Naive thymus-derived CD4-positive, alpha-beta T cell (primary cell): ENCODE measurements at regions of chr6 and their contacts with region 1.

Region 1: GRCh38 chr6:136607932-136608772 is 57.9 kb upstream of the MAP7 start:
- DNase-seq: peak; percentile 47 to 77 (median 69)
- ATAC-seq: peak; percentile 90
- H3K4me3 ChIP-seq: no peak overlapping the region
- H3K4me3 Mint-ChIP-seq: no peak overlapping the region
- H3K27ac ChIP-seq: no peak overlapping the region
- H3K27ac Mint-ChIP-seq: peak overlapping the region in 3 of 9 donors; percentile 11 to 53 (median 46)
- H3K4me1 ChIP-seq: no peaks in the 10 kb centered on the region
- H3K4me1 Mint-ChIP-seq: peaks cover 0 to 23% (median 5%) of the 10 kb centered on the region in 7 donors
- H3K27me3 ChIP-seq: no peaks in the 10 kb centered on the region
- H3K27me3 Mint-ChIP-seq: no peaks in the 10 kb centered on the region

Region 2: DNA sequence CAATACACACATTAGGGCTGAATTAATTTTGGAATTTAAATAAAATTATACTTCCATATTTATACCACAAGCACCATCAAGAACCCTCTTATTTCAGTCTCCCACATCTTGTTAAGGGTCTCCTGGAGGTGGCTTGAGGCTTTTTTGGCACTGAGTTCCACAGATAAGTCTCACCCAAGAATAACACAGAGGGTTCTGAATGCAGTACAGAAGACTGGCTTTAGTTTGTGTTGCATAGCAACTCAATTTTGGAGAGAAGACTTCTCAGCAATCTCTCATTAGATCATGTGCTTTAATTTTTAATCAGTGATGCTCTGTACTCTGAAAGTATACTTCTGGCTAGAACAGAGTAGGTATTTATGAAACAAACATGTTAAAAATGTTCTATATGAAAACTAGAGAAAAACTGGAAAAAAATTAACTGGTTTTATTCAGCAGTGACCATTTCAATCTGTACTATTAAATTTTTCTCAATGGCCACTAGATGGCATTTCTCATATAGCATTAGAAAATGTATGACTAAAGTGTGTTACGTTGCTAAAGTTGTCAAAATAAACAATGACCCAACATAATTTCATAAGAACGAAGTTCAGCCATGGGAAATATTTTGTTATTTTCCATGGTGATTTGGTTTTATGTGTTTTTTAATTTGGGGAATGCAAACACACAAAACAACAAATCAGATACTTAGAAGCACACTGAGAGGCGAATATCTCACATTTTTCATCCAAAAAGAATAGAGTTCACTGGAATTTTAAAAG is 25.3 kb before region 1 on chr6:
- CTCF ChIA-PET with region 1: no interaction called
- POLR2A ChIA-PET with region 1: no interaction called
- intact Hi-C with region 1: loop called in 1 of 2 experiments (anchors 2 kb)
- DNase-seq: no peak
- ATAC-seq: peak; percentile 72
- H3K4me3 ChIP-seq: no peak overlapping the region
- H3K4me3 Mint-ChIP-seq: no peak overlapping the region
- H3K27ac ChIP-seq: no peak overlapping the region
- H3K27ac Mint-ChIP-seq: no peak overlapping the region
- H3K4me1 ChIP-seq: no peaks in the 10 kb centered on the region
- H3K4me1 Mint-ChIP-seq: peaks cover 0 to 2% (median 0%) of the 10 kb centered on the region in 7 donors
- H3K27me3 ChIP-seq: no peaks in the 10 kb centered on the region
- H3K27me3 Mint-ChIP-seq: no peaks in the 10 kb centered on the region

Region 3: DNA sequence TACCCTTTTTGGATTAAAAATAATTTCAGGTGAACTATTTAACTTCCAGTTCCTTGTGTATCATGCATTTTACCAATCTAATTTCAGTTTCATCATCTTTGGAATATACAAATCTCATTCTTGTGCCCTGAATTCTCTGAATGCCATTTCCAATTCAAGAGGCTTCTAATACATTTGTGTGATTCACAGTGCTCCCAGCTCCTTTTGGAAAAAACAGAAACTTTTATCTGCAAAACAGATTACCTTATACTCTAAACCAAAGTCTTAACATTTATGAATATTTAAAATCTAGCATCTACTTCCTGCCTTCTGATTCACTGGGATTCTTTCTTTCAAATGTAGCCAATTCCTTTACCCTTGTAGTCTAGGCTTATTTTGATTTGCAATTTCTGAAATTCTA is 203.1 kb after region 1 on chr6:
- CTCF ChIA-PET with region 1: no interaction called
- POLR2A ChIA-PET with region 1: no interaction called
- intact Hi-C with region 1: no loop called
- DNase-seq: no peak
- ATAC-seq: no peak
- H3K4me3 ChIP-seq: no peak overlapping the region
- H3K4me3 Mint-ChIP-seq: no peak overlapping the region
- H3K27ac ChIP-seq: no peak overlapping the region
- H3K27ac Mint-ChIP-seq: no peak overlapping the region
- H3K4me1 ChIP-seq: no peaks in the 10 kb centered on the region
- H3K4me1 Mint-ChIP-seq: peaks cover 0 to 8% (median 6%) of the 10 kb centered on the region in 7 donors
- H3K27me3 ChIP-seq: no peaks in the 10 kb centered on the region
- H3K27me3 Mint-ChIP-seq: peaks cover 0 to 8% (median 0%) of the 10 kb centered on the region in 5 donors

Region 4: GRCh38 chr6:136927292-136927691 is 319.1 kb after region 1 on chr6:
- CTCF ChIA-PET with region 1: no interaction called
- POLR2A ChIA-PET with region 1: no interaction called
- intact Hi-C with region 1: loop called in 1 of 2 experiments (anchors 1 kb)
- DNase-seq: peak in 2 of 9 donors; percentile 10 to 18
- ATAC-seq: peak; percentile 38
- H3K4me3 ChIP-seq: no peak overlapping the region
- H3K4me3 Mint-ChIP-seq: no peak overlapping the region
- H3K27ac ChIP-seq: no peak overlapping the region
- H3K27ac Mint-ChIP-seq: no peak overlapping the region
- H3K4me1 ChIP-seq: peaks cover 0 to 4% of the 10 kb centered on the region in 2 donors
- H3K4me1 Mint-ChIP-seq: peaks cover 0 to 12% (median 6%) of the 10 kb centered on the region in 7 donors
- H3K27me3 ChIP-seq: no peaks in the 10 kb centered on the region
- H3K27me3 Mint-ChIP-seq: peaks cover 36 to 65% (median 46%) of the 10 kb centered on the region in 5 donors